ENCODE measurements at regions of chr4 and their contacts with region 1.

Region 1: DNA sequence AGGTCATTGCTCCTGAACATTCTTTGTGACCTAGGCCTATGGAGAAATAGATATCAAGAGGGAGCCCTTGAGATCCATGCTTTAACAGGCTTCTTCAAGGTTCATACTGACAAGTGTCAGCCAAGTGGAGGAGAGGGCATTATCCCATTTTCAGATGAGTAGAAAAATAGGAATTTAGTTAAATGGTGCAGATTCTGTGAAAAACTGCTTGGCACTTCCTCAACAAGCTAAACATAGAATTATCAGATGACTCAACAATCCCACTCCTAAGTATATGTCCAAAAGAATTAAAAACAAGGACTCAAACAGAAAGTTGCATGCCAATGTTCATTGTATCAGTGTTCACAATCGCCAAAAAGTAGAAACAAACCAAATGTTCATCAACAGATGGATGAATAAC is 43.8 kb upstream of the KCNIP4 start:
- DNase-seq: no peak
- ATAC-seq: no peak
- H3K4me3 ChIP-seq: no peak overlapping the region
- H3K27ac ChIP-seq: no peak overlapping the region
- H3K4me1 ChIP-seq: no peaks in the 10 kb centered on the region
- H3K27me3 ChIP-seq: no peaks in the 10 kb centered on the region
- CTCF ChIP-seq: no peak

Region 2: GRCh38 chr4:21656832-21657231 is 335.5 kb before region 1 on chr4:
- intact Hi-C with region 1: loop called in 1 of 2 experiments (anchors 10 kb)
- DNase-seq: no peak
- ATAC-seq: peak in 1 of 4 donors; percentile 55
- H3K4me3 ChIP-seq: no peak overlapping the region
- H3K27ac ChIP-seq: no peak overlapping the region
- H3K4me1 ChIP-seq: no peaks in the 10 kb centered on the region
- H3K27me3 ChIP-seq: no peaks in the 10 kb centered on the region
- CTCF ChIP-seq: no peak

Region 3: GRCh38 chr4:22739968-22740367 is 747.6 kb after region 1 on chr4:
- intact Hi-C with region 1: loop called in 1 of 2 experiments (anchors 5 kb)
- DNase-seq: no peak
- ATAC-seq: no peak
- H3K4me3 ChIP-seq: no peak overlapping the region
- H3K27ac ChIP-seq: no peak overlapping the region
- H3K4me1 ChIP-seq: no peaks in the 10 kb centered on the region
- H3K27me3 ChIP-seq: no peaks in the 10 kb centered on the region
- CTCF ChIP-seq: no peak